ENCODE measurements at regions of chr6 and their contacts with region 1.

Region 1: GRCh38 chr6:79813854-79814709 is 133.3 kb downstream of the ELOVL4 start:
- DNase-seq: peak; percentile 68
- H3K4me3 ChIP-seq: no peak overlapping the region; a peak in 1 of 4 replicates
- H3K27ac ChIP-seq: peak overlapping the region in 1 of 2 experiments; percentile 100; a peak in 2 of 4 replicates
- H3K4me1 ChIP-seq: peaks cover 0 to 48% of the 10 kb centered on the region in 2 experiments; a peak in 3 of 4 replicates
- H3K27me3 ChIP-seq: no peaks in the 10 kb centered on the region
- CTCF ChIP-seq: peak; percentile 94
- EP300 ChIP-seq: peak in 1 of 2 experiments; percentile 34; a peak in 1 of 4 replicates
- RAD21 ChIP-seq: peak; percentile 98

Region 2: GRCh38 chr6:79713701-79714322 is 100.3 kb before region 1 on chr6:
- CTCF ChIA-PET with region 1: interaction called, 12 read pairs
- POLR2A ChIA-PET with region 1: no interaction called
- DNase-seq: peak; percentile 53
- H3K4me3 ChIP-seq: no peak overlapping the region; a peak in 1 of 4 replicates
- H3K27ac ChIP-seq: no peak overlapping the region
- H3K4me1 ChIP-seq: peaks cover 0 to 5% of the 10 kb centered on the region in 2 experiments; a peak in 1 of 4 replicates
- H3K27me3 ChIP-seq: no peaks in the 10 kb centered on the region
- CTCF ChIP-seq: peak; percentile 78
- EP300 ChIP-seq: no peak
- RAD21 ChIP-seq: peak; percentile 90

Region 3: DNA sequence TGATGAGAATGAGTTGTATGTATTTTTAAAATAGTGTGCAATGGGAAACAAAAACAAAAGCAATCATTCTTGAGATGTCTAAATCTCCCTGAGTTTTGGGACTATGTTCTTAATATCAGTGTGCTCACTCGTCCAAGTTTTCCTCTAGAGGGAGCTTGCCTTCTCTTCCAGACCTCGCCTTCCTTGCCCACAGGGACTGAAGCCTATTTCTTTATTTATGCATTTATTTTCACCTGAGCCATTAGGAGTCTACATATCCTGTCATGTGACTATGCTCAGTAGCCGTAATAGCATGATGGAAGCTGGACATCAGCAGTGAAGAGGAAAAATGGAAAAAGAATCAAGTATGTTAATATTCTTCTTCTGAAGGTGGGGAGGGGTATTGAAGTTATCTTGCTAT is 51.7 kb before region 1 on chr6:
- CTCF ChIA-PET with region 1: interaction called, 15 read pairs
- POLR2A ChIA-PET with region 1: interaction called, 3 read pairs
- DNase-seq: no peak
- H3K4me3 ChIP-seq: no peak overlapping the region
- H3K27ac ChIP-seq: no peak overlapping the region
- H3K4me1 ChIP-seq: no peaks in the 10 kb centered on the region; a peak in 1 of 4 replicates
- H3K27me3 ChIP-seq: no peaks in the 10 kb centered on the region
- CTCF ChIP-seq: peak; percentile 30; the same call in 1 of the 2 replicates
- EP300 ChIP-seq: no peak
- RAD21 ChIP-seq: peak; percentile 56

Region 4: GRCh38 chr6:79777713-79778579 is 36.1 kb before region 1 on chr6:
- CTCF ChIA-PET with region 1: interaction called, 116 read pairs
- POLR2A ChIA-PET with region 1: interaction called, 18 read pairs
- DNase-seq: peak; percentile 92
- H3K4me3 ChIP-seq: peak overlapping the region; percentile 34 to 44
- H3K27ac ChIP-seq: peak overlapping the region in 1 of 2 experiments; percentile 51; a peak in 2 of 4 replicates
- H3K4me1 ChIP-seq: peaks cover 0 to 9% of the 10 kb centered on the region in 2 experiments; a peak in 2 of 4 replicates
- H3K27me3 ChIP-seq: no peaks in the 10 kb centered on the region
- CTCF ChIP-seq: peak; percentile 94
- EP300 ChIP-seq: no peak
- RAD21 ChIP-seq: peak; percentile 89

Region 5: DNA sequence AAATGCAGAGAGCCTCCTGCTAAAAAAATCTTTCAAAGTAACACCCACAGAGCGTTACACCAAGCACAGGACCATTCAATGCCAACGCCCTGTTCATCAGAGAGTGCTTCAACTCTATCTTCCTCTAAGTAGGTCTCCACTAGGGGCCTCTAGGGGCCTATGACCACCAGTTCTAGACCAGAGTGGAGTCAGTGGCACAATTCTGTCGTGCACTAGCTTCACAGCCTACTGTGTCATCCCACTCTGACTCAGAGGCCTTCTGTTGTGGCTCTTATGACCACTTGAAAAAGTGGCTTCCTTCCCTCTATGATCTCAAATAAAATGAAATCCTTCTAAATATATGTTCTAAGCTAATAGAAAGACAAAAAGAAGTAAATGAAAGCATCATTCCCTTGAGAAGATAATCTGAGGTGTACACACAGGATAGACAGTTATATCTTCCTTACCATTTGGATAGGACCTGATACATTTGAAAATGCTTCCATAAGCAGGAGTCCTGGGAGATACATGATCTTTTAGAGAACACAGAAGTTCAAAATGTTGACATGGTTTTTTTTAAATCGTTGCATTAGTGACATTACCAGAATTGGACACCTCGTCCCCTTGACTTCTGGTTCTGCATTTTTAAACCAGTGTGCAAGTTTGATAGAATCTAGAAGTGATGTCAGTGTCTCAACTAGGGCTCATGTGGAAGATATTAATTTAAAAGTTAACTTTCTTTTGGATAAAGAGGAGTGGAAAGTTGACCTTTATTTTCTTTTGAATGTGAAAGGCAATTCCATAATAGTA is 31.1 kb before region 1 on chr6:
- CTCF ChIA-PET with region 1: interaction called, 116 read pairs
- POLR2A ChIA-PET with region 1: interaction called, 18 read pairs
- DNase-seq: no peak
- H3K4me3 ChIP-seq: no peak overlapping the region
- H3K27ac ChIP-seq: peak overlapping the region in 1 of 2 experiments; percentile 98; a peak in 2 of 4 replicates
- H3K4me1 ChIP-seq: peaks cover 0 to 34% of the 10 kb centered on the region in 2 experiments; a peak in 2 of 4 replicates
- H3K27me3 ChIP-seq: no peaks in the 10 kb centered on the region
- CTCF ChIP-seq: no peak
- EP300 ChIP-seq: no peak
- RAD21 ChIP-seq: no peak

Region 6: DNA sequence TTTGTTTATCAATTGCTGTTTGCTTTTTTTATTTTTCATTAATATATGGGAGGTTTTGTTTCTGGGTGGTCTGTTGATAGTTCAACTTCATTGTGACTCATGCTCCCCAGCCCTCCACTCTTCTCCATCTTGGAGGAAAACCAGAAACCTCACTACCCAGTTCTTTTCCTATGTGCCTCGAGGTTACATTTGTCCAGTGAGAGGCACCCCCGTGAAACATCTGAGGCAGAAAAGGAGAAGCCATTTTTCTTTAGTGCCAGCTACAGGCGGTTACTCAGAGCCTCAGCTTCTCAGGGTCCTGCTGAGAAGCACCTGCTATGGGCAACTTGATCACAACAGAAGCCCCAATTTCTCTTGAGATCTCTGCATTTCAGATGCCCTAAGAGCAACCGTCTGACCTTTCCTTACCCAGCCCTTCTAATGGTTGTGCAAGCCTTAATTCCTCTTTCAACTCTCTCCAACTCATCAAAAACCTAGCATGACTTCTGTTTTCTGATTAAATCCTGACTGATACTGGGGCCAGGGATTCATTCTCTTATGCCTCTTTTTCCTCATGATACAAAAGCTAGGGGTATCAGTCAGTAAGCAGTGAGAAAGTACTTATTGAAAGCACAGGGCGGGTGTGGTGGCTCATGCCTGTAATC is 11.3 kb before region 1 on chr6:
- CTCF ChIA-PET with region 1: interaction called, 22 read pairs
- POLR2A ChIA-PET with region 1: interaction called, 4 read pairs
- DNase-seq: no peak
- H3K4me3 ChIP-seq: no peak overlapping the region
- H3K27ac ChIP-seq: peak overlapping the region in 1 of 2 experiments; percentile 62; a peak in 2 of 4 replicates
- H3K4me1 ChIP-seq: peaks cover 0 to 18% of the 10 kb centered on the region in 2 experiments; a peak in 2 of 4 replicates
- H3K27me3 ChIP-seq: no peaks in the 10 kb centered on the region
- CTCF ChIP-seq: no peak
- EP300 ChIP-seq: no peak
- RAD21 ChIP-seq: no peak

Region 7: DNA sequence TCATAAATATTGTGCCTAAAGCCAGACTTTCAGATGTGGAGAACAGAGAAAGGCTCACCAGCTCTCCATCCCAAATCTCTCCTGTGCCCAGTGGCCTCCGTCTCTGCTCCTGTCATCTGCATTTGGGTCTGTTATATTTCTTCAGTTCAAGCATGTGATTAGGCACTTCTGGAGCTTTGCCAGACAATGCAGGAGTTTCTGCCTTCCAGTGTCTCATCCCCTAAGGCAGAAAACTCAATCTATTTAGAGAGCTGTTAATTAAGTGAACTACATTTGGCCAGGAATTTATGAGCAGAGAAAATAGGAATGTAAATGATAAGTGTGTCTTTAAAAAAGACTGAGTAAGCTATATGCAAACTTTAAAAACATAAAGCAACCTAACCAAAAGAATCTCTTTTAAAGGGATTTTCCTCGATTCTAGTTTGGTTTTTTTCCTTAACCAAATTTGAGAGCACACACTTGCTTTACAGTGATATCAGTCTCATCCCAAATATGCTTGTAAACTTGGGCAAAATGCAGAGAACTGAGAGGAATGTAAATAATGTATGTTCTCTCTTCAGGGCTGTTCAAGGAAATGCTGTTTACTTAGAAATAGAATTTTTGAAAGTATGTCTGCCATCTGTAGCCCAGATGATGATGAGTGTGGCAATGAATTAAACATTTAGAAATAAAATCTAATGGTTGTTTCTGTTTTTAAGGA is 19.3 kb after region 1 on chr6:
- CTCF ChIA-PET with region 1: interaction called, 28 read pairs
- POLR2A ChIA-PET with region 1: interaction called, 10 read pairs
- DNase-seq: peak; percentile 58
- H3K4me3 ChIP-seq: no peak overlapping the region
- H3K27ac ChIP-seq: peak overlapping the region in 1 of 2 experiments; percentile 79; a peak in 2 of 4 replicates
- H3K4me1 ChIP-seq: peaks cover 5 to 14% of the 10 kb centered on the region in 2 experiments
- H3K27me3 ChIP-seq: no peaks in the 10 kb centered on the region; the same call in 1 of the 2 replicates
- CTCF ChIP-seq: no peak
- EP300 ChIP-seq: peak in 1 of 2 experiments; percentile 88; a peak in 2 of 4 replicates
- RAD21 ChIP-seq: no peak

Region 8: DNA sequence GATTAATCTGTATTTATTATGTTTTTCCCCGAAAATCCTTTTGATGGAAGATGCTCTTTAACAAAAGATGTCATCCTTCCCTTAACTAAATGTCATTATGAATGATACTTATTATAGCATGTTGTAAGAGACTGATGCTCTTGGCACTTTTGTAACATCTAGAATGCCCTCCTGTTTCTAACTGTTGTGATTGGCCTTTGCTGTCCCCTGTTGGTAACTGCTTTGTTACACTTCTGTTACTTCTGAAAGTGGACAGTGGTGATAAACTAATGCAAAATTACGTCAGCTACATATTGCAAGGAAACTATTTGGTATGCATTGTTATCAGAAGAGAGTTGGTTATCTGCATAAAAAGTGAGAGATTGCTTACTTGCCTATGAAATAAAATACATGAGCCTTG is 196.2 kb after region 1 on chr6:
- CTCF ChIA-PET with region 1: no interaction called
- POLR2A ChIA-PET with region 1: no interaction called
- DNase-seq: no peak
- H3K4me3 ChIP-seq: no peak overlapping the region
- H3K27ac ChIP-seq: no peak overlapping the region
- H3K4me1 ChIP-seq: peaks cover 5 to 12% of the 10 kb centered on the region in 2 experiments; a peak in 3 of 4 replicates
- H3K27me3 ChIP-seq: no peaks in the 10 kb centered on the region
- CTCF ChIP-seq: peak; percentile 16; the same call in 1 of the 2 replicates
- EP300 ChIP-seq: no peak
- RAD21 ChIP-seq: peak; percentile 7; the same call in 1 of the 2 replicates